ENCODE measurements at regions of chr6 and their contacts with region 1.

Region 1: GRCh38 chr6:109455502-109456282 is at the start of gene MICAL1:
- DNase-seq: peak; percentile 69
- H3K4me3 Mint-ChIP-seq: peak within 1 kb of the TSS; percentile 97
- H3K27ac Mint-ChIP-seq: peak within 1 kb of the TSS; percentile 97
- H3K4me1 Mint-ChIP-seq: peaks cover 59% of the 10 kb centered on the region
- H3K27me3 Mint-ChIP-seq: no peaks in the 10 kb centered on the region
- total RNA-seq, gene MICAL1: 40.8 and 47.1 TPM in 2 replicates

Region 2: DNA sequence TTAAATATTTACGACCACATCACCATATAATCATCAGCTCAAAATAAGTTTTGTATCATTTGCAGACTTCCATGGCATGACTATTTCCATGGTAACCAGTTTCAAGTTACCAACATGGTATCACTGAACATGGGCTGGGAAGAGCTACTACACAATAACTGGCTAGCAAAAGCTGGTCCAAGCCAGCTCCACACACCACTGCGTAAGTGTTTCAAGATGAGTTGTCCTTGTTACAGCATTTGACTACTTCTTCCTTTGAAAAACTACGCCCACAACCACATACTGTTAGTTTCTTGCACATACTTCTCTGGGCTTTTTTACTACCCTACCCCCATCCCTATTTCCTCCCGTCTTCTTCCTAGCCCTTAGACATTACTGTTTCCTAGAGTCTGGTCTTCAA is 81.9 kb before region 1 on chr6:
- intact Hi-C with region 1: loop called (anchors 2 kb)
- DNase-seq: peak; percentile 46
- H3K4me3 Mint-ChIP-seq: peak overlapping the region; percentile 81
- H3K27ac Mint-ChIP-seq: peak overlapping the region; percentile 92
- H3K4me1 Mint-ChIP-seq: peaks cover 75% of the 10 kb centered on the region
- H3K27me3 Mint-ChIP-seq: no peaks in the 10 kb centered on the region

Region 3: DNA sequence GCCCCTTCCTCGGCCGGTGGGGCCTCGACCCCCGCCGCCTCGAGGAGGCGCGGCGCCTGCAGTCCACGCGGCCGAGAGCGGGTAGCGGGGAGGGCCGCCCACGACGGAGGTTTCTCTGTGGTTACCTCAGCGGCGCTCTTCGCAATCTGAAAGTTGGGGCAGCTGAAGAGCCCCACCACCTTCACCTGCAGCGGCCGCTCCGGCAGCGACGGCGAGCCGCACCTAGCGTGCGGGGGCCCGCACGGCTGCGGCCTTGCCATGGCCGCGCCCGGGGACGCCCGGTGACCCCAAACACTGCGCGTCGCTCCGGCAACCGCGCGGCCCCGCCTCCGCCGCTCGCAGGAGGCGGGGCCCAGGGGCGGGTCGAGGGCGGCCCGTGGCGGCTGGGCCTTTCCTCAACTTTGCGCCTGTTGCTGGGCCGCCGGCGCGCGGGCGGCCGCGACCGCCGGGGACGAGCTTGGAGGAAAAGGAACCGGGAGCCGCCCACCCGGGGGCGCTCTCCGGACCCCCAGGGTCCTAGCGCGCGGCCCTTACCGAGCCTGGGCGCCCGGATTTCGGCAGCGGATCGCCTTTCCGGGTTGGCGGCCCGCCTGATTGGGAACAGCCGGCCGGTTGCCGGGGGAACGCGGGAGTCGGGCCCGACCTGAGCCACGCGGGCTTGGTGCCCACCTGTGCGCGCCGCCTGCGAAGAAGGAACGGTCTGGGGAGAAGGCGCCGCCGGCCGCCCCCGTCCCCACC is 15.2 kb before region 1 on chr6 and contains the starts of genes PPIL6 and SMPD2:
- intact Hi-C with region 1: loop called (anchors 1 kb)
- DNase-seq: peak; percentile 79
- H3K4me3 Mint-ChIP-seq: peak within 1 kb of the TSS; percentile 88
- H3K27ac Mint-ChIP-seq: peak within 1 kb of the TSS; percentile 91
- H3K4me1 Mint-ChIP-seq: peaks cover 23% of the 10 kb centered on the region
- H3K27me3 Mint-ChIP-seq: peaks cover 5% of the 10 kb centered on the region
- total RNA-seq, gene PPIL6: 0.13 and 0.29 TPM in 2 replicates
- total RNA-seq, gene SMPD2: 18.5 and 19.1 TPM in 2 replicates

Region 4: DNA sequence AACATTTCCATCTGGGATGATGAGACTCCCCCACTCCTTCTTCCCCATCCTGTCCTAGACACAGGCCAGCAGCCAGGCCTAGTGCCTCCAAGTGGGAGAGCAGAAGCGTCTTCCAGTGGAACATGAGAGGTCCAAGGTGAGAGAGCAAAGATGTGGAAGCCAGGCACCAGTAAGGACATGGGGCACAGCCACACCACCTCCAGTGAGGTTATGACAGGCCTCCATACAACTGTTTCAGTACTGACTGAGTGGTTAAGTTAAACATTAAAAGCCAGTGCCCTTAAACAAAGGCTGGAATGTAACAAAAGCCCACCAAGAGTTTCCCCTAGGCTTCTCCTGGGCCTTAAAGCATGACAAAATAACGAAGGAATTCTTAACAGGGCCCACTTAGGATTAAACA is 22.0 kb after region 1 on chr6:
- intact Hi-C with region 1: loop called (anchors 1 kb)
- DNase-seq: no peak
- H3K4me3 Mint-ChIP-seq: peak overlapping the region; percentile 83
- H3K27ac Mint-ChIP-seq: peak overlapping the region; percentile 87
- H3K4me1 Mint-ChIP-seq: peaks cover 77% of the 10 kb centered on the region
- H3K27me3 Mint-ChIP-seq: no peaks in the 10 kb centered on the region

Region 5: DNA sequence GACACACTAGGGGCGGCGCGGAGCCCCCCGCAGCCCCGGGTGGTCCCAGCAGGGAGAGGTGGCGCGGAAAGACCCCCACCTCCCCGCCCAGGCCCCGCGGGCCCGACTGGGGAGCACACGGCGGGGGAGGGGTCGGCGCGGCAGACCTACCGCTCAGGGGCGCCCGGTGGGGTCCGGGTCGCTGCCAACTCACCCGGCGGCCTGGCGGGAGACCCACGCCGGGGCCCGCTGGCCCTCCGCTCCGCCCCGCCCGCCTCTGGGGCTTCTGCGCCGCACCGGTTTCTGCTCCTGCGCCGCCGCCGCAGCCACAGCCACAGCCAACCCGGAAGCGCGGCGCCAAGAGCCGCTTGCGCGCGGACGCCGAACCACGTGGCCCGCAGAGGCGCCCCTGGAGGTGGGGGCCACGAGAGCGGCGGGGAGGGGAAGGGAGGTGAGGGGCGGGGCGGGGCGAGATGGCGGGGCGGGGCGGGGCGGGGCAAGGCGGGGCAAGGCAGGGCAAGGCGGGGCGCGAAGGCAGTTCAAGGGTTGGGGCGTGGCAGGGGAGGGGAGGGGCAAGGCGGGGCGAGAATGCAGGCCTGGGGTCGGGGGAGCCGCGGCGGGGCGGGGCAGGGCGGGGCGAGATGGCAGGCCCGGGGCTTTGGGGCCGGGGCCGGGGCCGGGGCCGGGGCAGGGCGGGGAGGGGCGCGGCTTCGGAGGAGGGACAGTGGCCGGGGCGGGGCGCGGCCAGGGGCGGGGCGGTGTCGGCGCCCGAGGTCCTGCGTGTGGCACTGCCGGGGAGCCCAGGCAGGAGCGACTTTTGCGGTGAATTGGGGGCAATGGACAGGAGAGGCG is 27.4 kb after region 1 on chr6 and contains the start of gene ZBTB24:
- intact Hi-C with region 1: loop called (anchors 1 kb)
- DNase-seq: peak; percentile 87
- H3K4me3 Mint-ChIP-seq: peak within 1 kb of the TSS; percentile 98
- H3K27ac Mint-ChIP-seq: peak within 1 kb of the TSS; percentile 92
- H3K4me1 Mint-ChIP-seq: peaks cover 47% of the 10 kb centered on the region
- H3K27me3 Mint-ChIP-seq: peaks cover 1% of the 10 kb centered on the region
- total RNA-seq, gene ZBTB24: 19.5 and 20.8 TPM in 2 replicates

Region 6: DNA sequence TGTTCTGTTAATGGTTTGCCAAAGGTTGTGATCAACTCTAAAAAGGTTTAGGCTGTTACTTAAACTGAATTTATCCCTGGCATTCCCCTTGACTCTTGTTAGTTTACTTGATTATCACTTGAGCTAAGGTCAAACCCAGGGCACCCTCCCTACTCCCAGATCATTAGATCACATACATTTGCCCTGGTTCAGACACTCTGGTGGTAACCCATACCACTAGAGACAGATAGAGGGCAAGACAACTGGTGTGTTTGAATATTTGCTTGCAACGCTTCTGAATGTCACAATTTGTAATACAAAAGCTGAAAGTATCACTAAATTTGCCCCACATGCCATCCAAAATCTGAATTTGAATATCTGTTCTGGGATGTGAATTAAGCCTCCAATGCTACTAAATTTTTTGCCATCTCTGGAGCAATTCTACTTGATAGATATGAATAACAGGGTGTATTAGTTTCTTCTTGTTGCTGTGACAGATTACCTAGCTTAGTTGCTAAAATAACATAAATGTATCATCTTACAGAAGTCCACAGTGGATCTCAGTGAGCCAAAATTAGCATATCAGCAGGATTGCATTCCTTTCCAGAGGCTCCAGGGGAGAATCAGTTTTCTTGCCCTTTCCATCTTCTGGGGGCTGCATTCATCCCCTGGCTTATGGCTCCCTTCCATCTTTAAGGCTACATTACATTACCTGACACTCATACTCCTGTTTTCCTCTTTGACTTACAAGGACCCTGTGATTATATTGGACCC is 280.8 kb after region 1 on chr6:
- intact Hi-C with region 1: no loop called
- DNase-seq: no peak
- H3K4me3 Mint-ChIP-seq: no peak overlapping the region
- H3K27ac Mint-ChIP-seq: no peak overlapping the region
- H3K4me1 Mint-ChIP-seq: no peaks in the 10 kb centered on the region
- H3K27me3 Mint-ChIP-seq: no peaks in the 10 kb centered on the region